ENCODE measurements at regions of chrX and their contacts with region 1.

Region 1: GRCh38 chrX:13646154-13646549 is 6.8 kb upstream of the TCEANC start:
- DNase-seq: no peak
- H3K27ac ChIP-seq: no peak overlapping the region
- CTCF ChIP-seq: peak; percentile 57

Region 2: GRCh38 chrX:13506574-13506973 is 139.6 kb before region 1 on chrX:
- CTCF ChIA-PET with region 1: interaction called, 13 read pairs
- POLR2A ChIA-PET with region 1: no interaction called
- DNase-seq: peak; percentile 20
- H3K27ac ChIP-seq: no peak overlapping the region
- CTCF ChIP-seq: peak; percentile 64

Measured in RWPE1 (cell line).